A549 (cell line): ENCODE measurements at regions of chr10 and their contacts with region 1.

Region 1: GRCh38 chr10:103888113-103888841 is 29.7 kb downstream of the STN1 start:
- DNase-seq: peak; percentile 72 to 77
- ATAC-seq: peak; percentile 58 to 72; a peak in 5 of 6 replicates
- H3K4me3 ChIP-seq: no peak overlapping the region
- H3K27ac ChIP-seq: peak overlapping the region; percentile 73 to 90
- H3K4me1 ChIP-seq: peaks cover 41% of the 10 kb centered on the region
- CTCF ChIP-seq: peak; percentile 95
- EP300 ChIP-seq: no peak
- POLR2A ChIP-seq: no peak
- RAD21 ChIP-seq: peak; percentile 92 to 93

Region 2: GRCh38 chr10:103542764-103543616 is 345.3 kb before region 1 on chr10:
- CTCF ChIA-PET with region 1: no interaction called
- POLR2A ChIA-PET with region 1: no interaction called
- DNase-seq: peak in 1 of 2 experiments; percentile 48
- ATAC-seq: peak; percentile 51 to 78; a peak in 4 of 6 replicates
- H3K4me3 ChIP-seq: no peak overlapping the region
- H3K27ac ChIP-seq: no peak overlapping the region
- H3K4me1 ChIP-seq: 0 out of 3 replicates have a peak, but pooled peaks cover 4% of the 10 kb centered on the region
- CTCF ChIP-seq: peak; percentile 39; the same call in 2 of the 3 replicates
- EP300 ChIP-seq: no peak
- POLR2A ChIP-seq: no peak
- RAD21 ChIP-seq: peak; percentile 12 to 42; a peak in 2 of 5 replicates

Region 3: GRCh38 chr10:103598654-103599115 is 289.6 kb before region 1 on chr10:
- CTCF ChIA-PET with region 1: interaction called, 14 read pairs
- POLR2A ChIA-PET with region 1: no interaction called
- DNase-seq: peak; percentile 80 to 95
- ATAC-seq: peak; percentile 86 to 96
- H3K4me3 ChIP-seq: no peak overlapping the region
- H3K27ac ChIP-seq: peak overlapping the region in 1 of 2 experiments; percentile 74; a peak in 3 of 6 replicates
- H3K4me1 ChIP-seq: peaks cover 5% of the 10 kb centered on the region
- CTCF ChIP-seq: peak; percentile 84
- EP300 ChIP-seq: no peak
- POLR2A ChIP-seq: no peak
- RAD21 ChIP-seq: peak; percentile 87 to 88

Region 4: GRCh38 chr10:103845972-103846371 is 42.3 kb before region 1 on chr10:
- CTCF ChIA-PET with region 1: interaction called, 10 read pairs
- POLR2A ChIA-PET with region 1: no interaction called
- DNase-seq: no peak
- ATAC-seq: no peak
- H3K4me3 ChIP-seq: no peak overlapping the region
- H3K27ac ChIP-seq: no peak overlapping the region
- H3K4me1 ChIP-seq: no peaks in the 10 kb centered on the region
- CTCF ChIP-seq: no peak
- EP300 ChIP-seq: no peak
- POLR2A ChIP-seq: no peak
- RAD21 ChIP-seq: no peak

Region 5: DNA sequence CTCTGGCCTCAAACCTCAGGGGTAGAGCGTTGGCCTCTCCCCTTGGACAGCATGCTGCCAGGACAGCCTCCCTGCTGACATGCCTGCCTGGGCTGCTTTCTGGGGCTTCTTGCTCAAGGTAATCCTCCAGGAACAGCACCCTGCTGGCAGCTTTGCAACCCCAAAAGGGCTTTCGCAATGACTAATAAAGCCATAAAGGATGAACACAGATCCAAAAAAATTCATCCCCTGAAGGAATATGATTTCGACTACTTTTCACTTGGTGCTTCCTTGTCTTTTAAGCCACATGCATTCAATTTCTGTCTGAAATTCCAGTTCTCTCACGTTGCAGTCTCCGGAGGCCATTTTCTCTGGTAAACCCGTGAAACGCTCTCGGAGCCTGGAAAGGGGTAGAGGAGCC is 17.8 kb before region 1 on chr10:
- CTCF ChIA-PET with region 1: interaction called, 32 read pairs
- POLR2A ChIA-PET with region 1: no interaction called
- DNase-seq: no peak
- ATAC-seq: peak in 1 of 2 experiments; percentile 63; a peak in 3 of 6 replicates
- H3K4me3 ChIP-seq: no peak overlapping the region
- H3K27ac ChIP-seq: peak overlapping the region in 1 of 2 experiments; percentile 40; a peak in 3 of 6 replicates
- H3K4me1 ChIP-seq: peaks cover 15% of the 10 kb centered on the region; the same call in 2 of the 3 replicates
- CTCF ChIP-seq: no peak
- EP300 ChIP-seq: no peak
- POLR2A ChIP-seq: no peak
- RAD21 ChIP-seq: no peak

Region 6: GRCh38 chr10:103901299-103901698 is 13.0 kb after region 1 on chr10:
- CTCF ChIA-PET with region 1: interaction called, 19 read pairs
- POLR2A ChIA-PET with region 1: no interaction called
- DNase-seq: no peak
- ATAC-seq: no peak
- H3K4me3 ChIP-seq: no peak overlapping the region
- H3K27ac ChIP-seq: no peak overlapping the region; a peak in 1 of 6 replicates
- H3K4me1 ChIP-seq: peaks cover 13% of the 10 kb centered on the region
- CTCF ChIP-seq: no peak
- EP300 ChIP-seq: no peak
- POLR2A ChIP-seq: no peak
- RAD21 ChIP-seq: 0 out of 5 replicates have a peak, but pooled peaks of 1 of the 2 experiments have one; percentile 3

Region 7: DNA sequence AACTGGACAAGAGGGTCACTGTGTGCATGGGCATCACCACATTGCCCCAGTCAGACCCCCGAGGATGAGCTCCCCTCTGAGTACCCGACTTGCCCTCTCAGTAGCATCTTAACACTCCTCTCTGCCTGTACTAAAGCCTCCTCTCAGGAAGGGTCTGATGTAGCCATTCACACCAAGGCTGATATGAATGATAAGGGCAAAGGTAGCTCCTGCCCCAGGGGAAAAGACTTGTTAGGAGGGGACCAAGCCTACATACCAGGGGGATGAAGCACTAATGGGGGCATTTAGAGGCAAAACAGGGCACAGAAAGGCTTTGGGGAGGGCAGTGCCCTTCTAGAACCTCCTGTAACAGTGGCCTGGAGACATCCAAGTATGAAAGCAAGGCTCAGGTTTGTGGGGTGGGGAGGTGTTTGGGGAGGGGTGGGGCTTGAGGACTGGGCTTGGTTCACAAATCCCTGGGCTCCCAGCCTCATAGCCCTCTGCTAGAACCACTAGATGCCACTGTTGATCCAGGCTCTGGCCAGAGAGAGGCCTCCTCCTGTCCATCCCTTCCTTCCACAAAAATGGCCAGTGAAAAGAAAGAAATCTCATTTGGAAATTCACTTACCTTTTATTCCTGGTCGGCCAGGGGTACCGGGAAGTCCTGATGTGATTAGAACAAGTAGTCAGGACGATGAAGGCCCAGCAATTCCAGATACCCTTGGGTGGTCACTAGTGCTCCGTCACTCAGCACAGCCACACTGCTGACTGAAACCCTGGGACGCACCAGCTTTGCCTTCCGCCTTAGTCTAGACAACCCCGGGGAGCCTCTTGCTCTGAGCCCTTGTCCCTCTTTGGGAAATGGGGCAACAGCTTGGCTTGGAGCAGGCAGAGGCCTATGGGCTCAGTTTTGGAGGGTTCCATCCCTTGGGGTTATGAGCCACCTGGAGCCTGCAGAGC is 157.1 kb after region 1 on chr10:
- CTCF ChIA-PET with region 1: interaction called, 16 read pairs
- POLR2A ChIA-PET with region 1: no interaction called
- DNase-seq: peak; percentile 78 to 86
- ATAC-seq: peak; percentile 87 to 96
- H3K4me3 ChIP-seq: no peak overlapping the region
- H3K27ac ChIP-seq: peak overlapping the region; percentile 48 to 79; a peak in 5 of 6 replicates
- H3K4me1 ChIP-seq: peaks cover 27% of the 10 kb centered on the region
- CTCF ChIP-seq: peak; percentile 93
- EP300 ChIP-seq: no peak
- POLR2A ChIP-seq: no peak
- RAD21 ChIP-seq: peak; percentile 99

Region 8: GRCh38 chr10:104209575-104210198 is 321.4 kb after region 1 on chr10:
- CTCF ChIA-PET with region 1: interaction called, 20 read pairs
- POLR2A ChIA-PET with region 1: no interaction called
- DNase-seq: peak; percentile 48 to 51
- ATAC-seq: peak; percentile 47 to 90; a peak in 4 of 6 replicates
- H3K4me3 ChIP-seq: no peak overlapping the region
- H3K27ac ChIP-seq: no peak overlapping the region
- H3K4me1 ChIP-seq: no peaks in the 10 kb centered on the region
- CTCF ChIP-seq: peak; percentile 82
- EP300 ChIP-seq: no peak
- POLR2A ChIP-seq: no peak
- RAD21 ChIP-seq: peak; percentile 84 to 89